ENCODE measurements at regions of chr5 and their contacts with region 1.

Region 1: GRCh38 chr5:35198075-35198474 is 32.2 kb downstream of the PRLR start:
- DNase-seq: peak; percentile 72 to 90 (median 87)
- ATAC-seq: peak; percentile 96 to 98 (median 97)
- H3K4me3 ChIP-seq: no peak overlapping the region
- H3K27ac ChIP-seq: peak overlapping the region in 2 of 4 donors; percentile 10 to 31
- H3K4me1 ChIP-seq: peaks cover 13 to 19% (median 14%) of the 10 kb centered on the region in 3 donors
- H3K27me3 ChIP-seq: no peaks in the 10 kb centered on the region
- CTCF ChIP-seq: no peak

Region 2: DNA sequence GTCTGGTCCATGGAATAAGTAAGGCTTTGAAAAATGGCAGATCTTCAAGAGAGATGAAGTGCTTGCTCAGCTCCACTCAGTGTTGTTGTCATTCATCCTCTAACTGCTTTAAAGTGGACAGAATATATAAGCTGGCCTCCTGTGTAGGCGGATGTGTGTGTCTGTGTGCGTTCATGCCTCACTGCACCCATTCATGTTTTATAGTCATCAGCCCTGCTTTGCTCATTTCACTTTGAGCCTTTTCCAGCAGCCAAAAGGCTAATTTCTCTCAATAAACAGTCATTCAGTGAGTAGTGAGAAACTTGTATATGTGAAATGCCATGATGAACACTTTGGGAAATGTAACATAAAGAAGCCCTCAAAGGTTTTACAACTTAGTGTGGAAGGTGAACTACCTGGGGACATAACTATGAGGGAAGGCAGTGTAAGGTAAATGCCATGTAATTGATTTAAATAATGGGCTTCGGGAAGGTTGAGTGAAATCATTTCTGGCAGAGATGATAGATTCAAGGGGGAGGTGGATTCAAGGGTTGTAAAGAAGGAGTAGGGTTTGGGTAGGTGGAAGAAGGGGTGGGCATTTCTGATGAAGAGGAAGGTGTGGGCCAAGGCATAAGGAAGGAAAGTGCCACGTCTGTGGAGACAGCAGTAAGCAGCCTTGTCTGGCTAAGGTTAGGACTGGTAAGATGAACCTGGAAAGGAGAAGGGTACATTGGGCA is 343.5 kb before region 1 on chr5:
- intact Hi-C with region 1: no loop called
- DNase-seq: no peak
- ATAC-seq: peak in 1 of 4 donors; percentile 43
- H3K4me3 ChIP-seq: no peak overlapping the region
- H3K27ac ChIP-seq: no peak overlapping the region
- H3K4me1 ChIP-seq: no peaks in the 10 kb centered on the region
- H3K27me3 ChIP-seq: no peaks in the 10 kb centered on the region
- CTCF ChIP-seq: no peak

Region 3: GRCh38 chr5:34932791-34933346 is 265.2 kb before region 1 on chr5:
- intact Hi-C with region 1: no loop called
- DNase-seq: no peak
- ATAC-seq: no peak
- H3K4me3 ChIP-seq: no peak overlapping the region
- H3K27ac ChIP-seq: no peak overlapping the region
- H3K4me1 ChIP-seq: peaks cover 11 to 18% (median 14%) of the 10 kb centered on the region in 3 donors
- H3K27me3 ChIP-seq: no peaks in the 10 kb centered on the region
- CTCF ChIP-seq: no peak

Region 4: DNA sequence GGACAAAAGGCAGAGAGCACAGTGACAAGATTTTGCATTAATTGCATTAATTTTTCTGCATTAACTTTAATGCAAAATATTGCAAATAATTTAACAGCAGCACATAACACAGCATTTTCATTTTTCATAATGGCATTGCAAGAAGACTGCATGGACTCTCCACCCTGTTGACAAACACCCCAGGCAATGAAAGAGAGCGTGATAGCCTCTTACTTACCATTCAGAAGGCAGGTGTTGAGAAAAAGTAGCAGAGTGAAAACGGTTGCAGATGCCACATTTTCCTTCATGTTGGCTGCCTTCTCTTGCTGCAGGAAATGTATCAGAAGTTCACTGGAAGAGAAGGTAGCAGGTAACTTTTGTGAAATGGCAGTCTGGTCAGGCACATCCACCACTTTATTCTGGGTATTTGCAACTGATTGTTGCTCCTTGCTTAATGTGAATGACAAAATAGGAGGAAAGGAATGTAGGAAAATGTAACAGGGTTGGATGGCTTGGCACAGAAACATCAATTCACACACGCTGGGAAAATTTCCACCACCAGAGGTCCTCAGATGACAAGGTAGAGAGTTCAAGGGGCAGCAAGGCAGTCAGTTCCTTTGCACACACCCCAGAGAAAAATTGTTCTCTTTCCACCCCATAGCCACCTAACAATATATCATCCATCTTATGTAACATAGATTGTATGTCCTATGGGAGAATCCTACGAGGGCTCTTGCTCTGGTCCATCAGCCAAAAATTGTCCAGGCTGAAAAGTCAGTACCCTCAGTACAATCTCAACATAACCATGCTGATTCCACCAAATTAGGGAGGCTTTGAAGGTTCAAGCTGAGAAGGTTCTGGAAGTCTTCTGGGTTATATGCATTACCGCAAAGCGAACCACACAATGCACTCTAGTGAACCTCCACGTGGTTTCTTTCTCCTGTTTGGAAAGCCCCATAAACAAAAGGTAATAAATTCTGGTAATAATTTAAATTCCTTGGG is 108.5 kb before region 1 on chr5:
- intact Hi-C with region 1: loop called in 2 of 3 experiments (anchors 10 kb)
- DNase-seq: peak in 3 of 6 donors; percentile 42 to 76 (median 47)
- ATAC-seq: peak; percentile 75 to 92 (median 91)
- H3K4me3 ChIP-seq: no peak overlapping the region
- H3K27ac ChIP-seq: no peak overlapping the region
- H3K4me1 ChIP-seq: peaks cover 0 to 3% (median 0%) of the 10 kb centered on the region in 3 donors
- H3K27me3 ChIP-seq: no peaks in the 10 kb centered on the region
- CTCF ChIP-seq: peak in 3 of 4 donors; percentile 55 to 66 (median 62)

Measured in pancreas (tissue), 10 donors.